Sigmoid colon (tissue), 7 donors: ENCODE measurements at regions of chr20 and their contacts with region 1.

Region 1: GRCh38 chr20:1118336-1119127 is at the start of gene PSMF1:
- DNase-seq: peak; percentile 97
- H3K4me3 ChIP-seq: peak within 1 kb of the TSS; percentile 95 to 99 (median 97)
- H3K27ac ChIP-seq: peak within 1 kb of the TSS; percentile 83 to 86 (median 84)
- H3K4me1 ChIP-seq: peaks cover 0 to 52% (median 47%) of the 10 kb centered on the region in 4 donors
- H3K27me3 ChIP-seq: no peaks in the 10 kb centered on the region
- CTCF ChIP-seq: peak in 1 of 4 experiments; percentile 11
- EP300 ChIP-seq: no peak
- POLR2A ChIP-seq: peak in 1 of 2 donors; percentile 37
- total RNA-seq, gene PSMF1: 54.2 to 148 (median 110) TPM

Region 2: GRCh38 chr20:833450-834150 is 284.9 kb before region 1 on chr20 and contains the start of gene FAM110A:
- intact Hi-C with region 1: loop called (anchors 10 kb)
- DNase-seq: peak; percentile 98
- H3K4me3 ChIP-seq: peak within 1 kb of the TSS; percentile 57 to 91 (median 70)
- H3K27ac ChIP-seq: peak within 1 kb of the TSS; percentile 59 to 79 (median 71)
- H3K4me1 ChIP-seq: peaks cover 0 to 19% (median 11%) of the 10 kb centered on the region in 4 donors
- H3K27me3 ChIP-seq: no peaks in the 10 kb centered on the region
- CTCF ChIP-seq: no peak
- EP300 ChIP-seq: no peak
- POLR2A ChIP-seq: no peak
- total RNA-seq, gene FAM110A: 0.55 to 2.5 (median 1.6) TPM

Region 3: DNA sequence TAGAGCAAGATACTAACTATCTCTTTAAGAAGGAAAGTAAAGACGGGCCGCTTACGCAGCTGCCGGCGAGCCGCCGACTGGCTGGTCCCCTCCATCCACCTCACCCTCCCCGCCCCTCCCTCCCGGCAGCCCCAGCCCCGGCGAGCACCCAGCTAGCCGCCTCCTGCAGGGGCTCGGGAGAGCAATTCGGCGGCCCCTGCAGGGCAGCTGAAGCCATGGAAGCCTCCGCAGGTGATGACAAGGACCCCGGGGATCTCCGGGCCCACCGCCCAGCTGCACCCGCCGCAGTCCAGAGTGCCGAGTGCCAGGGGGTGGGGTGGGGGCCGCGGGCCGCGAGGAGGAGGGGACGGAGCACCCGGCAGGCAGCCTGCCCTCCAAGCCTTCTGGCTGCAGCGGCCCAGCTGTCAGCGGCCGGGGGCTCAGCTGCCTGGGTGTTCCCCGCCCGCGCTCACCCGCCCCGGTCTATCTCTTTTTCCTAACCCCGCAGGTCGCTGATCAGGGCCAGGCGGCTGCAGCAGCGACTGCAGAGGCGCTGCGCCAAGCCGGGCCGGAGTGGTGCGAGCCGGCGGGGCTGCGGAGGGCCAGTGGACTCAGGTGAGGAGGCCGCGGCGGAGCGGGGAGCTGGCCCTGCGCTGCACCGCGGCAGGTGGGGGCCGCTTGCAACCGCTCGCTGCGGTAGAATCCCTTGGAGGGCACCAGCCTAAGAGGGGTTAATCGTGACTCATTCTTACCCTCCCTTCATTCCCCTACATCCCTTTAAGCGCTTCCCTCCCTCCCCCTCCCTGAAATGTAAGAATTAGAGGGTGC is 147.8 kb after region 1 on chr20 and contains the start of gene SNPH:
- intact Hi-C with region 1: loop called (anchors 5 kb)
- DNase-seq: peak; percentile 91
- H3K4me3 ChIP-seq: peak within 1 kb of the TSS; percentile 76 to 91 (median 88)
- H3K27ac ChIP-seq: peak within 1 kb of the TSS; percentile 73 to 87 (median 78)
- H3K4me1 ChIP-seq: peaks cover 0 to 22% (median 17%) of the 10 kb centered on the region in 4 donors
- H3K27me3 ChIP-seq: no peaks in the 10 kb centered on the region
- CTCF ChIP-seq: no peak
- EP300 ChIP-seq: no peak
- POLR2A ChIP-seq: no peak
- total RNA-seq, gene SNPH: 6.4 to 21.0 (median 8.9) TPM